Posterior vena cava (tissue), 2 donors: ENCODE measurements at regions of chr5 and their contacts with region 1.

Region 1: GRCh38 chr5:150161242-150162141 is 5.1 kb upstream of the CDX1 start:
- DNase-seq: peak; percentile 96

Region 2: GRCh38 chr5:150129813-150130492 is 31.5 kb before region 1 on chr5:
- intact Hi-C with region 1: loop called in 1 of 2 experiments (anchors 1 kb)
- DNase-seq: peak; percentile 91

Region 3: DNA sequence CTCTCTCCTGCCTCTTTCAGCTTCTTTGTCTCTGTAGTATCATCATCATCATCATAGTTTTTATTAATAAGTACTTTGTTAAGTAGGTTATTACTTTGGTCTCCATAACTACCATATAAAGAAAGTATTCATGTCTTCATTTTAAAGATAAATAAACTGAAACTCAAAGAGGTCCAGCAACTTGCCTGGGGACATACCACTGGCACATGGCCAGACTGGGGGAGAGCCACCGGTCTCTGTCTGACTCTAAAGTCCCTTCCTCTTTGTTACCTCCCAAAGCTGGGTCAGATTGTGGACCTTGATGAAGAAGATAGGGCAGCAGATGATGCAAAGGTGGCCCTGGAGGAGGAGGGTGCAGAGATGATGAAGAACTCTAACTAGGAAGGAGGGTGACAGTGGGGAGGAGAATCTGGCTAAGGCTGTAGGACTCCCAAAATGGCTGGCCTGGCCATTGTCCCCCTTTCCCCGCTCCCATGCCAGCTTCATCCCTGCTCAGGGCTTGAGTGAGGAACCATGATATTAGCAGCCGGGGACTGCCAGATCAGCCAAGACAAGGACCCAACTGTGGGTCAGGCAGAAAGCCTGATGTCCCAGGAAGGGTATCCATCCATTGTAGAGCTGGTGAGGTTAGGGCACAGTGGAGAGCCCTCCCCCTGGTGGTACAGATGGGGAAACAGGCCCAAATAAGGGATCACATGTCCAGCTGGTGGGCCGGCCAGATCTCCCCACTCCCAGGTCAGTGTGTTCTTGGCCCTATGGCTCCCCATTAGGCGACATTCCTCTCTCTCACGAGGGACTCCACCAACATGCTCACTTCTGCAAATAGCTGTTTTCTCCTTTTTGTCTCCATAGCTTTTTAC is 13.8 kb after region 1 on chr5:
- intact Hi-C with region 1: no loop called
- DNase-seq: no peak

Region 4: DNA sequence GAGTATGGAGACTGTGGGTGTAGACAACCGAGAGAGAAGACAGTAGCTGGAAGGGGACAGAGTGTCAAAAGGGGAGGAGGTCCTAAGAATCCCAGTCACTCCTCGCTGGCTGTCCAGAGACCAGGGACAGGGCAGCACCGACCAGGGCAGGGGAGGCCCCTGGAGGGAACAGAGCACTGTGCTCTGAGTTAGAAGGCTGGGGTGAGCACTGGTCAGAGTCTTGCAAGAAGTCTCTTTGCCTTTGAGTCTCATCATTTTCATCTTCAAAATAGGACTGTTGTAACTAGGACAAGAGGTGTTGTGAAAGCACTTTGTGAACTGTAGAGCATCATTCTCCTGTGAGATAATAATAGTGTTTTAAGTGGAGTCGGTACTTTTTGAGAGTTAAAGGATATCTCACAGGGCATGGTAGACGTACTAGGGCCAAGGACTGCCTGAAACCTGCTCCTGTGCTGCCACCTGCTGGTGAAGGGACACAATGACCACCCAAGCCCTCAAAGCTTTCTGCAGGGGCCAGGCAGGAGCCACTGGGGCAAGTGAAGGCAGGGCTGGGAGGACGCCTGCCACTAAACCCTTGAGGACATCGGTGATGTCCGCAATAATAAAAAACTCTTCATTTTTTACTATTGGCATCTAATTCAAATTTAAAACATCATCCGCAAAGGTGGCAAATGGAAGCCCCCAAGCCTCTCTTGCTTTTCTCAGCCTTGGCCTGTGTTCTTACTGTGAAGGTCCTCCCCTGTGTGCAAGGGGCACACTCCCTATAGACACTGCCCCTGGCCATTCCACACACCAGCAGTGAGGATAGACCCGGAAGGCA is 56.6 kb after region 1 on chr5:
- intact Hi-C with region 1: loop called (anchors 2 to 5 kb)
- DNase-seq: peak; percentile 94